ENCODE measurements at regions of chr3 and their contacts with region 1.

Region 1: DNA sequence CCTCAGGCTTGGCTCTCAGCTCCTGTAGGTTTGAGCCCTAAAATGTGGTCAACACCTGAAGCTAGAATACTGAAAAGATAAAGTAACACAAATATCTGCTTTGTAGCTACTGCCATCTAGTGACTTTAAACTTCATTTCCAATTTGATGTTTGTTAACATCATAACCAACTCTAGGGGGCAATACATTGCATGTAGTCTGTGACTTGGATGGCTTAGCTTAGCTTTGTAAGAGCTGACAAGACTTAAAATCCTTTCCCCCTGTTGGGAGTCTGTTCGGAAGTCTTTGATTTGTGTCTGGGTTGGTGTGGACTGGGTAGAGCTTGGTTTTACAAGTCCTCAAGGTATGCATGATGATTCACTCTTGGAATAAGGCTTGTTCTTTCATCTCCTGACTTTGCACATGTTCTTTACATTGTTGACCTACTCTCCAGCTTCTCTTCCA is 51.7 kb downstream of the SCN11A start:
- DNase-seq: peak; percentile 24
- H3K4me3 ChIP-seq: no peak overlapping the region
- CTCF ChIP-seq: peak; percentile 77

Region 2: DNA sequence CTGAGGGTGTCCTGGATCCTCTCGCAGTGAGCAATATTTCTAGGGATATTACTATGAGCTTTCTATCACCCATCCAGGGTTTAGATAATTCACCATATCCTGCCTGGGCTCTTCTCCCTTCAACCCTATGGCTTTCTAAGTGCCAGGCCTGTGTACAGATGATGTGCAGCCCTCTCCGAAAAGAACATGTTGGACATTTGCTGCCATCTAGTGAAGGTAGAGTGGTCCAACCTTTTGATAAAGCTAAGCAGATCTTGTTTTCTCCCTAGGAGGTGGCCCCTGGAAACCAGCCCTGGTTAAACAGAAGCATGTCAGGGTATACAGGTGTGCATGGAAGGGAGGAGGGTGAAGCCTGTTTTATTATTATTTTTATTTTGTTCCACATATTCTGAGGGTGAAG is 156.1 kb before region 1 on chr3:
- CTCF ChIA-PET with region 1: interaction called, 13 read pairs
- POLR2A ChIA-PET with region 1: no interaction called
- DNase-seq: no peak
- H3K4me3 ChIP-seq: no peak overlapping the region
- CTCF ChIP-seq: peak; percentile 61

Region 3: GRCh38 chr3:38980938-38981337 is 19.1 kb before region 1 on chr3:
- CTCF ChIA-PET with region 1: interaction called, 12 read pairs
- POLR2A ChIA-PET with region 1: no interaction called
- DNase-seq: no peak
- H3K4me3 ChIP-seq: no peak overlapping the region
- CTCF ChIP-seq: no peak

Region 4: DNA sequence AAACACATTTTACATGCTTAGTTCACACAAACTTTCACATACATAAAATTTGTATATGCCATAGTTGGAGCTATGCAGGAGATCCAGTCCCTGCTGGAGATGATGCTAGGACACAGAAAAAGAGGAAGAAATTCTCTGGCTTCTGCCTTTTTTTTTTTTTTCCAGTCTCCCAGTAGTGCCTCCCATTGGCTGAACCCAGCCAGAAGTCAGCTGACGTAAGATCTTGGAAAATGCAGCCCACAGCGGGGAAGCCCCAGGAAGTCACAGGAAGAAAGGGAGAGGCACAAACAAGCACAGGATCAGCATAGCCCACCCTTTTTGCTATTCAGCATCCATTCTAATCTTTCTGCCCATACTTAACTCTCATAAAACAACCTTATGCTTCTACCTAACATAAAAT is 13.3 kb after region 1 on chr3:
- CTCF ChIA-PET with region 1: interaction called, 28 read pairs
- POLR2A ChIA-PET with region 1: no interaction called
- DNase-seq: no peak
- H3K4me3 ChIP-seq: no peak overlapping the region
- CTCF ChIP-seq: no peak